Posterior cingulate gyrus (tissue), 11 donors: ENCODE measurements at regions of chr7 and their contacts with region 1.

Region 1: DNA sequence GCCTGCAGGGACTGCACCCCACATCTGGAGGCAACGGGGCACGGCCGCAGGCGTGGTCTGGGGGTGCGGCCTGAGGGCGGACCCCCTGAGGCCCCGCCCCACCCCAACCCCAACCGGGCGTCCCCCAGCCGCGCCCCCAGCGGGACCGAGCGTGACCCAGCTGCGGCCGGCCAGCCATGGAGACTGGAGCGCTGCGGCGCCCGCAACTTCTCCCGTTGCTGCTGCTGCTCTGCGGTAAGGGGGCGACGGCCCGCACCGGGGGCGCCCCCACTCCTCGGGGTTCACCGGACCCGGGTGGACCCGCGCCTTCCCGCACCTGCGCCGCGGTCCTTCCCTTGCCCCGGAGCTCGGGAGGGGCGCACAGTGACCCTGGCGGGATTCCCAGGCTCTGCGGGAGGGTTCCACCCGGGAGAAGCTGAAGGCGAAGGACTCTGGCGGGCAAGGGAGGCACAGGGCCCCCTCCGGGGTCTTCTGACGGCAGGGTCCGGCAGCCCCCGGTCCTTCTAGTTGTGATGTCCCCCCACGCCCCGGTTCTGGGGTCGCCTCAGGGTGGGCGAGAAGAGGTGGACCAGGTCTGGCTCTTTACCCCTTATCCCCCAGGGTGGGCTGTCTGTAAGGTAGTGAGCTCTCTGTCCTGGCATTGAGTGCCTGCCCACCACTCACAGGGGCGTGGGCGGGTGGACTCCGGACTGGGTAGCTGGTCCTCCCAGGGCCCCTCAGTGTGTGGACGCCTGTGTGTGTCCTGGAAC is at the start of gene RAMP3:
- DNase-seq: peak in 1 of 10 donors; percentile 71

Region 2: GRCh38 chr7:45259966-45260646 is 102.3 kb after region 1 on chr7:
- intact Hi-C with region 1: loop called (anchors 1 kb)
- DNase-seq: peak; percentile 54 to 96 (median 73)

Region 3: GRCh38 chr7:45863715-45864114 is 705.9 kb after region 1 on chr7:
- intact Hi-C with region 1: loop called (anchors 10 kb)
- DNase-seq: no peak